BJ (cell line): ENCODE measurements at regions of chr14 and their contacts with region 1.

Region 1: GRCh38 chr14:74945823-74946682 is 9.3 kb downstream of the PGF start:
- DNase-seq: no peak
- H3K4me3 ChIP-seq: no peak overlapping the region
- H3K27me3 ChIP-seq: no peaks in the 10 kb centered on the region; the same call in 1 of the 2 replicates
- CTCF ChIP-seq: peak; percentile 96

Region 2: DNA sequence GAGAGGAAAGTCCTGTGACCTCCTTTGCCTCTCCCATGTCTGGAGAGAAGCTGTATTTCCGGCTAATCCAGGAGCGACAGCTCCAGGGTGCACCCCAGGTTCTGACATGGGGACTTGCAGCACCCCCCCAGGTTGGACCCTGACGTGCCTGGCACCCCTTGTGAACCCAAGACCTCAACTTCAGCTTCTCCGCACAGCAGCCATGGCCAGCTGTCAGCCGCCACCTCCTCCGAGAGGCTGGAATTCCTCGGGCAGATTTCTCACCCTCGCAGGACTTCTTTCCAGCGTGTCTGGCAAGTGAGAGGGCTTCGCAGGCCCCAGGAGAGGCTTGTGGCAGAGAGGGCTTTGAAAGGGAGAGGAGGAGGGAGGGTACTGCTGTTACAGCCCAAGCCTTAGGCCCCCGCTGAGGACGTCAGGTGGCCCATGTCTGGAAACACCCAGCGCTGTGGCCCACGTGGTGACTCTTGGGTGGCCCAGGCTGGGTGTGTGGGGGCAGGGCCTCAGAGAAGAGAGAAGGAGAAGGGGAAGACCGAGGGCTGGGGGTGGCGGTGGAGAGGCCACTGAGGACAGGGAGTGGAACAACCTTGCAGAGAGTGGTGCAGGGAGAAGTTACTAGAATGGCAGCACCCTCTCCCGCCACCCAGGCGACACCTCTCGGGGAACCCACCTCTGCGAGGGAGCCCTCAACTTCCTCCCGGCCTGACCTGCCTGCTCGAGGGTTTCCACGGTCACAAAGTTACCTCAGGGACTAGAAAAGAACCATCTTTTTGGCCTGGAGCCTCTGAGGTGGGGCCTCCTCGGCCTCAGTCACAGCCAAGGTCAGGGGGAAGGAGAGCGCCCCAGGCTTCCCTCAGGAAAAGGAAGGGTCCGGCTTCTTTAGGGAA is 11.3 kb before region 1 on chr14:
- CTCF ChIA-PET with region 1: interaction called, 16 read pairs
- POLR2A ChIA-PET with region 1: no interaction called
- DNase-seq: no peak
- H3K4me3 ChIP-seq: no peak overlapping the region
- H3K27me3 ChIP-seq: peaks cover 2% of the 10 kb centered on the region; the same call in 1 of the 2 replicates
- CTCF ChIP-seq: no peak

Region 3: DNA sequence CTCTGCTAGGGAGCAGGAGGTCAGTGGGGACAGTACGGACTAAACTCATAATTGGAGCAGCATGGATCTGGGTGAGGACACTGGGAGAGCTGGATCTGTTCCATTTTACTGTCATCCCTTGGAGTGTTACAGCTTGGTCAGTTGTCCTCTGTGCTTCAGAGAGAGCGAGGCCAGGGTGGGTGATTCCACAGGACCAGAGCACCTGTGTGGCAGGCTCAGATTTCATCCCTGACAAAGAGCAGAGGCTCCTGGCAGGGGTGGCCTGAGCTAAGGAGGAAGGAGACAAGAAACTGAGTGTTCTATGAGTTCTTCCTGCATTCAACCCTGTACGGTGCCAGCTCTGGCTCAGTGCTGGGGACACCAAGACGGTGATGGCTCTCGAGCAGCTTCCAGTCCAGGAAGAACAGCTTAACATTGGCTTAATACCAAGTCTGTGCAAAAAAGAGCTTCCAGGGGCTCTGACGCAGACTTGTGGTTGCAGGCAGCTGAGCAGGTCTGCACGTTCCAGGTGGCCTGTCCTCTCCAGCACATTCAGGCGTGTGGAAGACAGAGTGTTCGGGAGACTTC is 17.7 kb after region 1 on chr14:
- CTCF ChIA-PET with region 1: interaction called, 14 read pairs
- POLR2A ChIA-PET with region 1: no interaction called
- DNase-seq: no peak
- H3K4me3 ChIP-seq: no peak overlapping the region
- H3K27me3 ChIP-seq: no peaks in the 10 kb centered on the region
- CTCF ChIP-seq: no peak

Region 4: DNA sequence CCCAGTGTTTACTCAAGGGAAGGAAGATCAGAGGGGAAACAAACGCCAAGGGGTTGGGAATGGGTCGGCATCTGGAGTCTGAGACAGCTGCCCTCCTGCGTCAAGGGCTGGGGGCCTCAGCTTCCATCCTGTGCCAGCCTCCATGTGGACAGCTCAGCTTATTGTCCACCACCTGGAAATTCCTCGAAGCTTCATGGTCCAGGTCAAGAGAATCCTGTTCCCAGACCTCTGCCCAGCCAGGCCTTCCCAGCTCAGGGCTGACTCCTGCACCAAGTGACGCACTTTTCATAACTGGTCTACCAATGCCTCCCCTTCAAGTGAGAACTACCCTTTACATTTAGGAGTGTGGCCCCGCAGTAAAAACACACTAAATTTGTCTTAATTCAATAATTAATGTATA is 24.8 kb after region 1 on chr14:
- CTCF ChIA-PET with region 1: interaction called, 14 read pairs
- POLR2A ChIA-PET with region 1: no interaction called
- DNase-seq: no peak
- H3K4me3 ChIP-seq: no peak overlapping the region
- H3K27me3 ChIP-seq: no peaks in the 10 kb centered on the region
- CTCF ChIP-seq: no peak